ENCODE measurements at regions of chr16 and their contacts with region 1.

Region 1: GRCh38 chr16:8946544-8946943 is 17.2 kb downstream of the USP7 start:
- DNase-seq: no peak
- H3K4me3 ChIP-seq: no peak overlapping the region
- H3K27ac ChIP-seq: no peak overlapping the region
- H3K4me1 ChIP-seq: no peaks in the 10 kb centered on the region
- H3K27me3 ChIP-seq: no peaks in the 10 kb centered on the region
- CTCF ChIP-seq: no peak

Region 2: GRCh38 chr16:8892101-8892575 is 54.4 kb before region 1 on chr16:
- CTCF ChIA-PET with region 1: no interaction called
- dilution Hi-C with region 1: loop called (anchors 5 kb)
- in situ Hi-C with region 1: no loop called
- intact Hi-C with region 1: no loop called
- DNase-seq: no peak
- H3K4me3 ChIP-seq: no peak overlapping the region
- H3K27ac ChIP-seq: no peak overlapping the region
- H3K4me1 ChIP-seq: no peaks in the 10 kb centered on the region
- H3K27me3 ChIP-seq: no peaks in the 10 kb centered on the region
- CTCF ChIP-seq: no peak